Astrocyte of the cerebellum (primary cell): ENCODE measurements at regions of chr16 and their contacts with region 1.

Region 1: GRCh38 chr16:3400779-3401688 is at the starts of genes ZNF174 and ZSCAN32:
- DNase-seq: peak; percentile 98
- H3K4me3 ChIP-seq: peak within 1 kb of the TSS; percentile 87
- CTCF ChIP-seq: no peak

Region 2: DNA sequence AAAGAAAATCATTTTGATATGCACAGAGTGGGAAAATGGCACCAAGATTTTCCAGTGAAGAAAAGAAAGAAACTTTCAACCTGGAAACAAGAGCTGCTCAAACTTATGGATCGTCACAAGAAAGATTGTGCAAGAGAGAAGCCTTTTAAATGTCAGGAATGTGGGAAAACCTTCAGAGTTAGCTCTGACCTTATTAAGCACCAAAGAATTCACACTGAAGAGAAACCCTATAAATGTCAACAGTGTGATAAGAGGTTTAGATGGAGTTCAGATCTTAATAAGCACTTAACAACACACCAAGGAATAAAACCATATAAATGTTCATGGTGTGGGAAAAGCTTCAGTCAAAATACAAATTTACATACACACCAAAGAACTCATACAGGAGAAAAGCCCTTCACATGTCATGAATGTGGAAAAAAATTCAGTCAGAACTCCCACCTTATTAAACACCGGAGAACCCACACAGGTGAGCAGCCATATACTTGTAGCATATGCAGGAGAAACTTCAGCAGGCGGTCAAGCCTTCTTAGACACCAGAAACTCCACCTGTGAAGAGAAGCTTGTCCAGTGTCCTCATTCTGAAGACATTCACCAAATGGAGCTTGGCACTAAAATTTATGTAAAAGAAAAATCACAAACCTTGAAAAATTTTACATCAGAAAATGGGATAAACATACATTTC is 83.6 kb before region 1 on chr16:
- in situ Hi-C with region 1: loop called (anchors 5 kb)
- DNase-seq: no peak
- H3K4me3 ChIP-seq: no peak overlapping the region
- CTCF ChIP-seq: no peak

Region 3: GRCh38 chr16:3467921-3468320 is 66.9 kb after region 1 on chr16:
- in situ Hi-C with region 1: no loop called
- DNase-seq: no peak
- H3K4me3 ChIP-seq: no peak overlapping the region
- CTCF ChIP-seq: no peak